Heart left ventricle (tissue), 16 donors: ENCODE measurements at regions of chr14 and their contacts with region 1.

Region 1: GRCh38 chr14:60980811-60981632 is at the starts of genes SLC38A6 and TRMT5:
- DNase-seq: peak; percentile 93 to 96 (median 95)
- ATAC-seq: peak; percentile 90 to 99 (median 98)
- H3K4me3 ChIP-seq: peak within 1 kb of the TSS; percentile 56 to 94 (median 76)
- H3K27ac ChIP-seq: peak within 1 kb of the TSS; percentile 33 to 92 (median 84)
- H3K4me1 ChIP-seq: peaks cover 0 to 74% (median 24%) of the 10 kb centered on the region in 12 donors
- H3K27me3 ChIP-seq: no peaks in the 10 kb centered on the region
- CTCF ChIP-seq: peak in 1 of 12 donors; percentile 12
- POLR2A ChIP-seq: peak in 1 of 2 donors; percentile 67
- total RNA-seq, gene SLC38A6: 1.6 to 19.6 (median 4.9) TPM
- total RNA-seq, gene TRMT5: 2.8 to 9.7 (median 6.7) TPM

Region 2: DNA sequence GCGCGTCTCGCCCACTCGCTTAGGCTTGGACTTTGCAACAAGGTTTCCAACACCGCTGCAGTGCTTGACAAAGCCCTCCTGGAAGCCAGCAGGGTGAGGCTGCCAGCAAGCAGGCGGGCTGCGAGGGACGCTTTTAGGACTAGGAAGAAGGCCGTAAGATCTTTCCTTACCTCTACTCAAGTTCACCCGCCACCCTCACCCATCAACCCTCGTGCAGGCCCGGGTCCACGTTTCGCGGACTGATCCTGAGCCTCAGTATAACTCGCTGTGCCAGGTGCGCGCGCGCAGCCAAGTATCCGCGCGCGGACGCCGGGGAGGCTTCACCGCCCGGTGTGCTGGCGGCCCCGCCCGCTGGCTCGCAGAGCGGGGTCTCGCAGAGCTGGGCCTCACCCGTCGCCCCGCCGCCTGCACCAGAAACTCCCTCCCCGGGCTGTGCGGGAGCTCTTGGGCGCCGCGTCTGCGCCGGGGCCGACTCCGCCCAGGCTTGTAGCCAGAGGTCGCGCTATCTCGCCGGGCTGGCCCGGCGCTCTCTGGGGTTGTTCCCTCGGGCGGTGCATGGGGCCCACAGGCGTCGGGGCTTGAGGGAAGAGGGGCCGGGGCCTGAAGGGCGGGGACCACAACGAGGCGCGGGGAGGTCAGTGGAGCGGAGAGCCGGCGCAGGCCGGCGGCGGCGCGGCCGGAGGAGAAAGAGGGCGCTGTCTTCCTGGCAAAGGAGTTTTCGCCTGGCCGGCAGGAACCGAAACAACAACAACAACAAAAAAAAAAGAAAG is 324.2 kb before region 1 on chr14:
- intact Hi-C with region 1: loop called in 1 of 10 experiments (anchors 5 kb)
- DNase-seq: peak in 2 of 5 donors; percentile 49 to 63
- ATAC-seq: peak in 3 of 4 donors; percentile 73 to 85 (median 81)
- H3K4me3 ChIP-seq: peak overlapping the region; percentile 50 to 73 (median 62)
- H3K27ac ChIP-seq: no peak overlapping the region
- H3K4me1 ChIP-seq: peaks cover 2 to 46% (median 23%) of the 10 kb centered on the region in 12 donors
- H3K27me3 ChIP-seq: peaks cover 43 to 100% (median 96%) of the 10 kb centered on the region in 9 donors
- CTCF ChIP-seq: peak in 10 of 12 donors; percentile 14 to 62 (median 38)
- POLR2A ChIP-seq: no peak

Region 3: GRCh38 chr14:60713513-60713912 is 267.5 kb before region 1 on chr14:
- intact Hi-C with region 1: loop called in 1 of 10 experiments (anchors 10 kb)
- DNase-seq: no peak
- ATAC-seq: no peak
- H3K4me3 ChIP-seq: no peak overlapping the region
- H3K27ac ChIP-seq: no peak overlapping the region
- H3K4me1 ChIP-seq: no peaks in the 10 kb centered on the region
- H3K27me3 ChIP-seq: peaks cover 0 to 12% (median 0%) of the 10 kb centered on the region in 9 donors
- CTCF ChIP-seq: no peak
- POLR2A ChIP-seq: no peak

Region 4: DNA sequence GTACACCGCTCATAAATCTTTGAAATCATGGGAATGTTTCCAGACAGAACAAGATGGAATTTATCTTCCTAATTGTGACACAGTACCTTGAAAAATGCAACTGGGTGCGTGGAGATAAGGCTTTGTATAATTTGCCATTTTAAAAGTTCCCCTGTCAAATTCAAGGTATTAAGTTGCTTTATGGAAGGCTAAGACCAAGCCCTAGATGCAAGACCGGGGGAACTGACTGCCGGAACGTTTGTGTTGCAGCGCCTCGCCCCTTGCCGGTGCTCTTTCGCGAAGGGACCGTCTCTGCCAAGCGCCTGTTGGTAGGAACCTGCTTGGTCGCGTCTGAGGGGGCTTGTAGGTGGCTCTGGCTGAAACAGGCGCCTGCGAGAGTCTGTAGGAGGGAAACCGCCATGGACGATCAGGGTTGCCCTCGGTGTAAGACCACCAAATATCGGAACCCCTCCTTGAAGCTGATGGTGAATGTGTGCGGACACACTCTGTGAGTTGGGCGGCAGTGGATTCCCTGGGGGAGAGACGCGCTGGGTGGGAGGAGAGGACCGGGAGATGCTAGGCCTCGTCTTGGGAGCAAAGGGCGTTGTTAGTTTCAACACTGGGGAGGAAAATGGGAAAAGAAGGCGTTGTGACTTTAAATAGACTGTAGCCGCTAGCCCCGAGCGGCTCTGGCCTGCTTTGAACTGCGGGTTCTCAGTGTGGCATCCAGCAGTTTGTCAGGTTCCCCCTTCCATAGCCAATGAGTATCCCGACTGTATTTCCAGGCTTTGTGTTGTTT is 246.4 kb before region 1 on chr14 and contains the start of gene MNAT1:
- intact Hi-C with region 1: loop called in 3 of 10 experiments (anchors 5 kb)
- DNase-seq: peak; percentile 71 to 87 (median 74)
- ATAC-seq: peak; percentile 91 to 97 (median 96)
- H3K4me3 ChIP-seq: peak within 1 kb of the TSS; percentile 49 to 92 (median 78)
- H3K27ac ChIP-seq: peak within 1 kb of the TSS in 11 of 12 donors; percentile 50 to 83 (median 68)
- H3K4me1 ChIP-seq: peaks cover 0 to 34% (median 19%) of the 10 kb centered on the region in 12 donors
- H3K27me3 ChIP-seq: peaks cover 0 to 12% (median 0%) of the 10 kb centered on the region in 9 donors
- CTCF ChIP-seq: peak in 2 of 12 donors; percentile 8 to 22
- POLR2A ChIP-seq: peak in 1 of 2 donors; percentile 49
- total RNA-seq, gene MNAT1: 21.4 to 32.6 (median 27.0) TPM

Region 5: GRCh38 chr14:60862286-60862685 is 118.7 kb before region 1 on chr14:
- intact Hi-C with region 1: loop called in 1 of 10 experiments (anchors 10 kb)
- DNase-seq: peak in 4 of 5 donors; percentile 27 to 49 (median 34)
- ATAC-seq: peak; percentile 79 to 90 (median 82)
- H3K4me3 ChIP-seq: no peak overlapping the region
- H3K27ac ChIP-seq: peak overlapping the region in 2 of 12 donors; percentile 4 to 25
- H3K4me1 ChIP-seq: peaks cover 0 to 30% (median 12%) of the 10 kb centered on the region in 12 donors
- H3K27me3 ChIP-seq: no peaks in the 10 kb centered on the region
- CTCF ChIP-seq: no peak
- POLR2A ChIP-seq: no peak

Region 6: DNA sequence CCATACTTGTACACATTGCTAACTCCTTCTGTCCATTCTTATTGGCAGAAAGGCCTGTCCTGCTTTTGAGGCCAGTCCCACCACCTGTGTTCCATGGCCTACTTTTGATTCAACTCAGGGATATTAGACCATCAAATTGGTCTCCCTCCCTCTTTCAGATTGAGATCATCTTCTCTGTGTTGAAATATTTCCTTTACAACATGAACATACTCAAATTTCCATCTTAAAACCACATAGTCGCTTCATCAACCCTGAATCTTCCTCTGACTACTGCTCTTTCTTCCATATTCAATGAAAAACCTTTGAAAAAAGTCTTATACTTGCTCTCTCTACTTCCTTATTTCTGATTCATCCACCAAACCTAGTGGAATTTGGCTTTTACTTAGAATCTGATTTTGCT is 35.0 kb before region 1 on chr14:
- intact Hi-C with region 1: loop called in 1 of 10 experiments (anchors 5 kb)
- DNase-seq: no peak
- ATAC-seq: no peak
- H3K4me3 ChIP-seq: no peak overlapping the region
- H3K27ac ChIP-seq: no peak overlapping the region
- H3K4me1 ChIP-seq: peaks cover 0 to 42% (median 11%) of the 10 kb centered on the region in 12 donors
- H3K27me3 ChIP-seq: no peaks in the 10 kb centered on the region
- CTCF ChIP-seq: no peak
- POLR2A ChIP-seq: no peak

Region 7: GRCh38 chr14:62885451-62885850 is 1904.4 kb after region 1 on chr14:
- intact Hi-C with region 1: no loop called
- DNase-seq: no peak
- ATAC-seq: no peak
- H3K4me3 ChIP-seq: no peak overlapping the region
- H3K27ac ChIP-seq: no peak overlapping the region
- H3K4me1 ChIP-seq: no peaks in the 10 kb centered on the region
- H3K27me3 ChIP-seq: peaks cover 0 to 3% (median 0%) of the 10 kb centered on the region in 9 donors
- CTCF ChIP-seq: no peak
- POLR2A ChIP-seq: no peak